IMR-90 (cell line): ENCODE measurements at regions of chr6 and their contacts with region 1.

Region 1: GRCh38 chr6:28136585-28137504 is 4.8 kb upstream of the ZKSCAN8 start:
- DNase-seq: peak; percentile 96
- ATAC-seq: peak; percentile 70
- H3K4me3 ChIP-seq: peak overlapping the region; percentile 95
- H3K27ac ChIP-seq: peak overlapping the region; percentile 94
- H3K4me1 ChIP-seq: peaks cover 2% of the 10 kb centered on the region; the same call in 1 of the 2 replicates
- H3K27me3 ChIP-seq: no peaks in the 10 kb centered on the region
- CTCF ChIP-seq: no peak
- POLR2A ChIP-seq: peak; percentile 72
- RAD21 ChIP-seq: no peak

Region 2: GRCh38 chr6:28188111-28188979 is 51.5 kb after region 1 on chr6:
- CTCF ChIA-PET with region 1: no interaction called
- POLR2A ChIA-PET with region 1: no interaction called
- dilution Hi-C with region 1: no loop called
- in situ Hi-C with region 1: no loop called
- intact Hi-C with region 1: no loop called
- DNase-seq: no peak
- ATAC-seq: no peak
- H3K4me3 ChIP-seq: no peak overlapping the region
- H3K27ac ChIP-seq: no peak overlapping the region
- H3K4me1 ChIP-seq: no peaks in the 10 kb centered on the region
- H3K27me3 ChIP-seq: no peaks in the 10 kb centered on the region
- CTCF ChIP-seq: no peak
- POLR2A ChIP-seq: no peak
- RAD21 ChIP-seq: no peak

Region 3: DNA sequence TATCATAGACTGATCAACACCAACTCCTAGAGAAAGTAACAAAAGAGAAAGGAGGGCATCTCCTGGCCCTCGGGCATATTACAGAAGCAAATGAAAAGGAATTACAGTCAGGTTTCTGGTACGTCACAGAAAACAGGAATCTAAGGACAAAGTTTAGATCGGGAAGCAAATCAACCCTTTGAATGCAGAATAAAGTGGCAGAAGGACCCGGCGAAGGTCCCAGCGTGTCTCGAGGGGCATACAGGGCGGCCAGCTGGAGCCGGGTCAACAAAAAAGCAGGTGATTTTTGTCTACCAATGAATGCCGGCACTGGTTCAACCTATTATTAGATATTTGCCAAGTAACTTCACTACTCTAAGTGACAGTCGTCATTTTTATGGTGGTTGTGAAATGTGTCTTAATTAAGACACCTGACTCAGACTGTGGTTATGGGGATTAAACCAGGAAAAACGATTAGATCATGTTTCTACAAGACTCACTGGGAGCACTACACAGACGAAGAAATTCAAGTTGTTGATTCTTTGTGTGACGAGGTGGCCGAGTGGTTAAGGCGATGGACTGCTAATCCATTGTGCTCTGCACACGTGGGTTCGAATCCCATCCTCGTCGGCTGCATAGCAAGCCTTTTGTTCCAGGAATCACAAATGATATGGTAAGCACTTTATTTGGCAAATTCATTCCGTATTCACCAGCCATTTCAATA is 75.8 kb after region 1 on chr6:
- CTCF ChIA-PET with region 1: no interaction called
- POLR2A ChIA-PET with region 1: no interaction called
- dilution Hi-C with region 1: no loop called
- in situ Hi-C with region 1: loop called (anchors 10 kb)
- intact Hi-C with region 1: loop called (anchors 2 kb)
- DNase-seq: peak; percentile 90
- ATAC-seq: peak; percentile 92
- H3K4me3 ChIP-seq: peak overlapping the region; percentile 58
- H3K27ac ChIP-seq: no peak overlapping the region
- H3K4me1 ChIP-seq: no peaks in the 10 kb centered on the region
- H3K27me3 ChIP-seq: peaks cover 24% of the 10 kb centered on the region
- CTCF ChIP-seq: peak; percentile 33; the same call in 1 of the 2 replicates
- POLR2A ChIP-seq: no peak
- RAD21 ChIP-seq: peak; percentile 35

Region 4: GRCh38 chr6:28225056-28225834 is 88.4 kb after region 1 on chr6 and contains the start of gene ZSCAN9:
- CTCF ChIA-PET with region 1: no interaction called
- POLR2A ChIA-PET with region 1: no interaction called
- dilution Hi-C with region 1: no loop called
- in situ Hi-C with region 1: no loop called
- intact Hi-C with region 1: loop called (anchors 1 kb)
- DNase-seq: peak; percentile 89
- ATAC-seq: peak; percentile 93
- H3K4me3 ChIP-seq: peak within 1 kb of the TSS; percentile 82
- H3K27ac ChIP-seq: peak within 1 kb of the TSS; percentile 61
- H3K4me1 ChIP-seq: no peaks in the 10 kb centered on the region
- H3K27me3 ChIP-seq: no peaks in the 10 kb centered on the region
- CTCF ChIP-seq: no peak
- POLR2A ChIP-seq: no peak
- RAD21 ChIP-seq: 0 out of 2 replicates have a peak, but pooled peaks have one; percentile 10
- total RNA-seq, gene ZSCAN9: 16.9 and 17.7 TPM in 2 replicates

Region 5: DNA sequence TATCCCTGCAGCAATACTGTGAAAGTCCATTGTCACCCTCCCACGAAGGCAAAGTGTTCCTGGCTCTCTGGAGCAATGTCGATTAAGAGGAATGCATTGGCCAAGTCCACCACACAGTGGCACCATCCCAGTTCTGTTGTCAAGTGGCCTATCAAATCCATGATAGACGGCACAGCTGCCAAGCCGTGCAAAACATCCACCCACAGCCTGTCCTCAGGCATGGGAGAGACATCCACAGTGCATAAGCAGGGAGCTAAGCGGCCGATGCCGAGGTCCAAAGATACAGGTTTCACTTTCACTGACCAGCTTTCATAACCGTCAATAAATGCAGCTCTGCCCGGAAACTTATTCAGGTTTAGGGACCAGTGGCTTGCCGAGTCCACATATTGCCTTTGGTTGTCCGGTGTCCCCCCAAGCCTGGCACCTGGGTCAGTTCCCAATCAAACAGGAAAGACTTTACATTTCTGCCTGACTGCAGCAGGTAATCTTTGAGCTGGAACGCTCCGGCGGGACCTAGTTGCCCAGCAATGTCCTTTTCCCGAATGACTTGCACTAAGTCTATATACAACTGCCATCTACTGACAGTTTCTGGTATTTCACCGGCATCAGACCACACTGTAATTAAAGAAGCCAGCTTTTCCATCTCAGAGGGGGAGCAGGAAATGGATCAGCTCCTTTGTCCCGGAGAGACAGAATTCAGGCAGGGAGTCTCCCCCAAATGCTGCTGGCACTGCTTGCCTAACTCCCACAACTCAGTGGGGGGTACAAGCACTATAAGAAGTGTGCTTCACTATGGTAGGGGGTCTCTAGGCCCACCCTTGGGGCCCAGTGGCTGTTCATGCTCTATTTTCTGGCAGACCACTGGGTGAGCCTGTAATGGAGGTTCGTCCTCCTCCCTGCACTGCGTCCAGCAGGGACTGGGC is 219.2 kb after region 1 on chr6:
- CTCF ChIA-PET with region 1: interaction called, 6 read pairs
- POLR2A ChIA-PET with region 1: no interaction called
- dilution Hi-C with region 1: no loop called
- in situ Hi-C with region 1: loop called (anchors 5 kb)
- intact Hi-C with region 1: loop called (anchors 1 kb)
- DNase-seq: peak; percentile 91
- ATAC-seq: peak; percentile 94
- H3K4me3 ChIP-seq: peak overlapping the region; percentile 64
- H3K27ac ChIP-seq: peak overlapping the region; percentile 71
- H3K4me1 ChIP-seq: peaks cover 15% of the 10 kb centered on the region
- H3K27me3 ChIP-seq: no peaks in the 10 kb centered on the region
- CTCF ChIP-seq: peak; percentile 81
- POLR2A ChIP-seq: no peak
- RAD21 ChIP-seq: peak; percentile 82